HepG2 (cell line): ENCODE measurements at regions of chr3 and their contacts with region 1.

Region 1: DNA sequence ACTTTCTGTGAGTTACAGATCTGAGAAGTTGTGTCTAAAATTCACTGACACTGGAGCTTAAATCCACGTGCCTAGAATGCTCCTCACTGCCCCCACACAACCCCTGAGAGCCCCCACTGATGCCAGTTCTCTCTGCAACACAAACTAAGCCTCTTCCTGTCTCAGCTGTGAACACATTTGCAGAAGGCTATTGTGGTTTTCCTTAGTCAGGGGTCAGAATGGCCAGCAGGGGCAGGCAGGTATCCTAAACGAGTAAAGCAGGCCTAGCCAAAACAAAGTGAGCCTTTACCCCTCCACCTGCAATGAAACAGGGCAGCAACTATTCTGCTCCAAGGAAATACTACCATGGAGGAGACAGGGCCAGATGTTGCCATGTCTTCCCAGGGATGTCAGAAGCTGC is 78.6 kb downstream of the FHIT start:
- DNase-seq: peak; percentile 6
- ATAC-seq: peak; percentile 68; the same call in 2 of the 3 replicates
- H3K4me3 ChIP-seq: no peak overlapping the region
- H3K27ac ChIP-seq: no peak overlapping the region
- H3K4me1 ChIP-seq: peaks cover 10% of the 10 kb centered on the region
- H3K27me3 ChIP-seq: no peaks in the 10 kb centered on the region
- CTCF ChIP-seq: no peak
- EP300 ChIP-seq: no peak
- POLR2A ChIP-seq: no peak
- RAD21 ChIP-seq: no peak

Region 2: DNA sequence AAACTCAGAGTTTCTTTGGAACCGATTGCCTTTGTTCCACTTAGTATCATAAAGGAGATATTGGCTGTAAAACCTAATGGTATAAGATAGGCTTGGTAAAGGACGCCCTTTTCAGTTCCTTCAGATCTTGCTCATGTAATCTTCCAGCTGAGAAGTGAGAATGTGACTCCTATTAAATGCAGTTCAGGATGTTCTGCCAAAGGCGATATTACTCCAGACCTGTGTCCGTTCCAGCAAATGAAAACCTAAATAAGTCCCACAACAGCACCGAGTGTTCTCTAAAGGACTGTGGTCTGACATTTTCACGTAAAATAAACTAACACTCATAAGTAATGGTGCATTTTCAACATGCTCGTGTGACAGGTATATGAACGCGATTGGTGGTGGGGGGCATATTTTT is 924.4 kb after region 1 on chr3:
- CTCF ChIA-PET with region 1: no interaction called
- POLR2A ChIA-PET with region 1: no interaction called
- in situ Hi-C with region 1: no loop called
- intact Hi-C with region 1: loop called (anchors 5 kb)
- DNase-seq: no peak
- ATAC-seq: no peak
- H3K4me3 ChIP-seq: no peak overlapping the region
- H3K27ac ChIP-seq: no peak overlapping the region
- H3K4me1 ChIP-seq: no peaks in the 10 kb centered on the region
- H3K27me3 ChIP-seq: no peaks in the 10 kb centered on the region
- CTCF ChIP-seq: no peak
- EP300 ChIP-seq: no peak
- POLR2A ChIP-seq: no peak
- RAD21 ChIP-seq: no peak